PC-3 (cell line): ENCODE measurements at regions of chr10 and their contacts with region 1.

Region 1: DNA sequence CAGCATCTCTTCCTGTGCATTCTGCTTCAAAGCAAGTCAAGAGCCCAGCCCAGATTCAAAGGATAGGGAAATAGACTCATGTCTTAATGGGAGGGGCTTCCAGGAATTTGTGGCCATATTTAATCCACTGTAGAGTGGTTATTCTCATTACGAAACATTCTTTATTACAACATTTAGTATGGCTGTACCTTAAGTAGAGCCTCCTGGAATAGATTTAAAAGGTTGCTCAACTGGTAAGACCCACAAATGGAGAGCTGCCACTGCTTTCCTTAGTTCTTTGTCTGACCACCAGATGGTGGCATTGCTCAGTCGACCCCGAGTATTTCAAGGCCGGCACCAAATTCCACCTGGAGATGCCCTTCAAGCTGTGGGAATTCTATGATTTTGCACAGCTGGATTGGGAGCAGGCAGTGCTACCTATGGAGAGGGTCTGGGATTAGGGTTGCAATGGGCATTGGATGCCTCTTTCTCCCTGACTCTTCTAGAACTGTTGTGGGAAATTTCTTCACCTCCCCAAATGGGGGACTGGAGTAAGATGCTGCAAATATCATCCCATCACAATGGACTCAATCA is 102.2 kb downstream of the RBM20 start:
- DNase-seq: peak; percentile 73
- ATAC-seq: peak; percentile 87
- H3K4me3 ChIP-seq: no peak overlapping the region
- H3K27ac ChIP-seq: no peak overlapping the region
- H3K4me1 ChIP-seq: no peaks in the 10 kb centered on the region
- H3K27me3 ChIP-seq: no peaks in the 10 kb centered on the region
- CTCF ChIP-seq: peak; percentile 78

Region 2: GRCh38 chr10:110610308-110610774 is 136.0 kb before region 1 on chr10:
- CTCF ChIA-PET with region 1: interaction called, 3 read pairs
- POLR2A ChIA-PET with region 1: no interaction called
- intact Hi-C with region 1: loop called (anchors 2 kb)
- DNase-seq: peak; percentile 60
- ATAC-seq: peak; percentile 78
- H3K4me3 ChIP-seq: no peak overlapping the region
- H3K27ac ChIP-seq: no peak overlapping the region
- H3K4me1 ChIP-seq: no peaks in the 10 kb centered on the region
- H3K27me3 ChIP-seq: no peaks in the 10 kb centered on the region
- CTCF ChIP-seq: peak; percentile 78

Region 3: GRCh38 chr10:110765188-110765990 is 19.0 kb after region 1 on chr10:
- CTCF ChIA-PET with region 1: no interaction called
- POLR2A ChIA-PET with region 1: no interaction called
- intact Hi-C with region 1: no loop called
- DNase-seq: no peak
- ATAC-seq: no peak
- H3K4me3 ChIP-seq: no peak overlapping the region
- H3K27ac ChIP-seq: no peak overlapping the region
- H3K4me1 ChIP-seq: no peaks in the 10 kb centered on the region
- H3K27me3 ChIP-seq: no peaks in the 10 kb centered on the region
- CTCF ChIP-seq: no peak

Region 4: GRCh38 chr10:110803830-110804338 is 57.5 kb after region 1 on chr10:
- CTCF ChIA-PET with region 1: no interaction called
- POLR2A ChIA-PET with region 1: no interaction called
- intact Hi-C with region 1: loop called (anchors 5 kb)
- DNase-seq: peak; percentile 48
- ATAC-seq: peak; percentile 91
- H3K4me3 ChIP-seq: no peak overlapping the region
- H3K27ac ChIP-seq: no peak overlapping the region
- H3K4me1 ChIP-seq: no peaks in the 10 kb centered on the region; the same call in 1 of the 2 replicates
- H3K27me3 ChIP-seq: no peaks in the 10 kb centered on the region
- CTCF ChIP-seq: peak; percentile 65

Region 5: GRCh38 chr10:110893559-110894179 is 147.3 kb after region 1 on chr10:
- CTCF ChIA-PET with region 1: no interaction called
- POLR2A ChIA-PET with region 1: no interaction called
- intact Hi-C with region 1: loop called (anchors 1 kb)
- DNase-seq: peak; percentile 74
- ATAC-seq: peak; percentile 62
- H3K4me3 ChIP-seq: no peak overlapping the region
- H3K27ac ChIP-seq: no peak overlapping the region
- H3K4me1 ChIP-seq: 0 out of 2 replicates have a peak, but pooled peaks cover 5% of the 10 kb centered on the region
- H3K27me3 ChIP-seq: no peaks in the 10 kb centered on the region
- CTCF ChIP-seq: peak; percentile 65